ENCODE measurements at regions of chr6 and their contacts with region 1.

Region 1: GRCh38 chr6:133248241-133249001 is 7.3 kb downstream of the EYA4 start:
- DNase-seq: no peak
- ATAC-seq: no peak
- H3K4me3 ChIP-seq: no peak overlapping the region
- H3K27ac ChIP-seq: no peak overlapping the region
- H3K4me1 ChIP-seq: peaks cover 49% of the 10 kb centered on the region
- H3K27me3 ChIP-seq: no peaks in the 10 kb centered on the region
- CTCF ChIP-seq: no peak

Region 2: GRCh38 chr6:133286765-133287164 is 38.3 kb after region 1 on chr6:
- intact Hi-C with region 1: loop called in 1 of 2 experiments (anchors 5 kb)
- DNase-seq: no peak
- ATAC-seq: peak in 3 of 4 donors; percentile 57 to 67 (median 59)
- H3K4me3 ChIP-seq: no peak overlapping the region
- H3K27ac ChIP-seq: no peak overlapping the region
- H3K4me1 ChIP-seq: peaks cover 47% of the 10 kb centered on the region
- H3K27me3 ChIP-seq: no peaks in the 10 kb centered on the region
- CTCF ChIP-seq: no peak